ENCODE measurements at regions of chr14 and their contacts with region 1.

Region 1: DNA sequence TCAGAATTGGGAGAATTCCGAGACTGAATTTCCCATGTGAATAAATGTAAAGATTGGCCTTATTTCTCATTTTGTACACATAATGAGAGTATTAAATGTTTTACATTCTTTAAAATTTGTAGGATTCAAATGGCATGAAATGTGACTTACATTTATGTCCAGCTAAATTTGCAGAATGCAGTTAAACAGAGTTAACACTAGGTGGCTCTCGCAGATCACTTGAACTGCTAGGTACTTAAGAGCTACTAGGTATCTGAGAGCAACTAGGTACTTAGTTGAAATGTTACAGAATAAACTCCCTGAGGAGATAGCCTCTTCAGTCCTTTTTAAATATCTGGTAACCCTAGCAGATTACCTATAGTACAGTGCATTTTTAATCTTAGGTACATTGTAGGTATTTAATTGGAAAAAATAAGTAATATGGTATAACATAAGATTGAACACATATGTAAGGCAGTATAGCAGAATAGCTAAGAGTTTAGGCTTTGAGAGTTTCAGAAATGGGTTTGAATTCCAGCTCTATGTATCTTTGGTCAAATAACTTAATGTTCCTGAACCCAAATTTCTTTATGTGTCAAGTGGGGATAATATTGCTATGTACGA is 73.8 kb downstream of the KIAA0586 start:
- DNase-seq: no peak
- ATAC-seq: no peak
- H3K4me3 ChIP-seq: no peak overlapping the region
- H3K27ac ChIP-seq: no peak overlapping the region
- H3K4me1 ChIP-seq: no peaks in the 10 kb centered on the region
- H3K27me3 ChIP-seq: no peaks in the 10 kb centered on the region

Region 2: DNA sequence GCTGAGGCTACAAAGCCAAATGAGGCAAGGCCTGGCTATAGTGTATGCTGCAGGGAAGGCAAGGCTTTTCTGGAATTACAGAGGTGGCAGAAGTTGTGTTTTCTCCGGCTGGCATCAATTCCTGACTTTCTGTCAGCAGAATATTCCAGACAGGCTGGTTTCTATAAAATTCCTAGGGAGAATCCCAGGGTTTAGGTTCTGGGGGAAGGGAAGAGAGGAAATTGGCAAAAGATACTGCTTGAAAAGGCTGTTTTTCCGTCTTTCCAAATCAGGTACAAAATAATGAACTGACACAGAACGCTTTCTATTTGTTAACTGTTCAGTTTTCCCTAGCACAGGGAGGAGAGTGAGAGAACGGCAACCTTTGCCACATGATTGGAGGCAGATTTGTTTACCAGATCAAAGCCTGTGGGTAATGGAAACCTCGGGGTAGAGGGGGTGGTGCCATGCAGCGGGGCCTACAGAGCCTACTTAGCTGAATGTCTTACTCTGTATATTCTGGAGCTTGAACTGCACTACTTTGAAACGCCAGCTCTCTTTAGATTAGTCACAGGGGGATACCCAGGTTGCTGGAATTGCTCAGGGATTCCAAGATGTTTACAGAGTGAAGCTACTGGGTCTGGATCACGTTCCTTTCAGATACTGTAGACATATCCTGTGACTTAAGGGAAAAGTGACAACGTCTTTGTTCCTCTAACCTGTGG is 70.6 kb after region 1 on chr14:
- intact Hi-C with region 1: loop called in 1 of 2 experiments (anchors 5 kb)
- DNase-seq: no peak
- ATAC-seq: no peak
- H3K4me3 ChIP-seq: no peak overlapping the region
- H3K27ac ChIP-seq: no peak overlapping the region
- H3K4me1 ChIP-seq: peaks cover 0 to 1% of the 10 kb centered on the region in 2 donors
- H3K27me3 ChIP-seq: no peaks in the 10 kb centered on the region

Region 3: GRCh38 chr14:58808828-58809227 is 307.5 kb after region 1 on chr14:
- intact Hi-C with region 1: no loop called
- DNase-seq: no peak
- ATAC-seq: no peak
- H3K4me3 ChIP-seq: no peak overlapping the region
- H3K27ac ChIP-seq: no peak overlapping the region
- H3K4me1 ChIP-seq: no peaks in the 10 kb centered on the region
- H3K27me3 ChIP-seq: no peaks in the 10 kb centered on the region

Region 4: GRCh38 chr14:59028476-59029202 is 527.3 kb after region 1 on chr14:
- intact Hi-C with region 1: loop called in 1 of 2 experiments (anchors 10 kb)
- DNase-seq: peak; percentile 72 to 80
- ATAC-seq: peak; percentile 83
- H3K4me3 ChIP-seq: no peak overlapping the region
- H3K27ac ChIP-seq: no peak overlapping the region
- H3K4me1 ChIP-seq: no peaks in the 10 kb centered on the region
- H3K27me3 ChIP-seq: no peaks in the 10 kb centered on the region

Region 5: DNA sequence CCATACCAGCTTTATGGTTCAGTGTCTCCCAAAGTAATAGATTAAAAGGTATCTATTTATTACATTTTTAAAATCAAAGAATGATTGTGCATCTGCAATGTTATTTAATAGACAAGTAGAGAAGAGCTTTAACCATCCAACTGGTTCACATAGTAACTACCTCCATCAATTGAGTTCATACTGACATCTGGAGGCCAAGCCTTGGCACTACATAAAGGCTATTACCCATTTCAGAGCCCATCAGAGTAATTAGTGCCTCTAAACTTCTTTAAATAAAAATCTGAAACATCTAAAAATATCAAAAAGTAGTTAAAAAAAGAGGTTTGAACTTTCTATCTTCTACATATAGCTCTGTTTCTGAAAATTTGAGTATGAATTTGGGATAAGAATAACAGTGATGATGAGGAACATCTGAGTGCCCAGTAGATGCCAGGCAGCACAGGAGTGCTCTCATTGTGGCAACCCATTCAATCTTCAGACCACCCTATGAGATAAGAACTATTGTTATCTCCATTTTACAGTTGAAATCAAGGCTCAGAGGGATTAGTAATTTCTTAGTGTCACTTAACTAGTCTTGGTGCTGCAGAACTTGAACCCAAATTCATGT is 554.2 kb after region 1 on chr14:
- intact Hi-C with region 1: loop called in 1 of 2 experiments (anchors 2 kb)
- DNase-seq: no peak
- ATAC-seq: peak; percentile 78
- H3K4me3 ChIP-seq: no peak overlapping the region
- H3K27ac ChIP-seq: no peak overlapping the region
- H3K4me1 ChIP-seq: no peaks in the 10 kb centered on the region
- H3K27me3 ChIP-seq: no peaks in the 10 kb centered on the region